Activated B cell treated with CpG ODN at 0.5 μM for 24 hours (primary cell): ENCODE measurements at regions of chr3 and their contacts with region 1.

Region 1: GRCh38 chr3:146664403-146664802 is 59.3 kb upstream of the PLSCR5 start:
- DNase-seq: no peak
- ATAC-seq: no peak
- H3K4me3 Mint-ChIP-seq: no peak overlapping the region
- H3K27ac Mint-ChIP-seq: no peak overlapping the region
- H3K4me1 Mint-ChIP-seq: no peaks in the 10 kb centered on the region
- H3K27me3 Mint-ChIP-seq: no peaks in the 10 kb centered on the region
- CTCF ChIP-seq: no peak

Region 2: DNA sequence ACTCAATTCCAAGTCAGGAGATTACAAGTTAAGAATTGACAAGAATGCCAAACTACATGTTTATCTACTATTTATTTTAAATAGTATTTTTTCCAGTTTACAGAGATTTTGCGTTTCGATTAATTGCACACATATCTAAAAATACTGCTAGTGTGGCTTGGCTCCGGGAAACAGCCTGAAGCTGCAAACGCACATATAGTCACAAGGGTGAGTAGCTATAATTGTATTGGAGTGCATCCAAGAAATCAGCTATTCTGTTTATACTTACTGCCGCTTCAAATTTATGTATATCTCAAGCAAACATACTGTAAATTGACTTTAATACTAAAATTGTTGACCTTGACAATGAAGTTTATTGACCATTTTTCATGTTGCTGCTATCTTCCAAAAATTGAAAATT is 17.8 kb after region 1 on chr3:
- CTCF ChIA-PET with region 1: no interaction called
- POLR2A ChIA-PET with region 1: no interaction called
- intact Hi-C with region 1: loop called (anchors 1 kb)
- DNase-seq: no peak
- ATAC-seq: no peak
- H3K4me3 Mint-ChIP-seq: no peak overlapping the region
- H3K27ac Mint-ChIP-seq: no peak overlapping the region
- H3K4me1 Mint-ChIP-seq: no peaks in the 10 kb centered on the region
- H3K27me3 Mint-ChIP-seq: no peaks in the 10 kb centered on the region
- CTCF ChIP-seq: no peak